ENCODE measurements at regions of chr2 and their contacts with region 1.

Region 1: DNA sequence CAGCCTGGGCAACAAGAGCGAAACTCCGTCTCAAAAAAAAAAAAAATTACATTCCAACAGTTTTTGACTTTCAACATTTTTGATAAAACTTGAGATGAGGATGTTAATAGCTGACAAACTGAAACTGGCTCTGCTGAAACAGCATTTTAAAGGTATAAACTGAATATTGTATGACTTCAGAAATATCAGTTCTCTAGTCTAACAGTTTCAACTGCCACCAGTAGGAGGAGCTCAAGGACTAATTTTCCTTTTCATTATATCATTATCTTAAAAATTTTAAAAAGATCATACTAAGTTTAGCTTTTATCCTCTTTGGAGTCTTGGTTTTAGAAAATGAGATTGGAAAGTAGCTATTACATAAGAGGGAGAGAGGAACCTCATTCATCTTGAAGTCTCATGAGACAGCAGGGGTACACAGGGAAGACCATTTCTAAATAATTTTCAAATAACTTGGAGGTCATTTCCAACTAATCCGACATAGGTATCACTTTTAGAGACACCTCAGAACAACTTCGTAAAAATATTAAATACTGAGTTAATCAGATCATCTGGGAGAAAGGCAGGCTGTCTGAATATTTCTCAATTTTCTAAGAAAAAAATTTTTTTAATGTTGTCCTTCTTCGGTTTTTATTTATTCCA is 37.6 kb upstream of the MCM6 start:
- DNase-seq: no peak
- H3K4me3 ChIP-seq: no peak overlapping the region
- CTCF ChIP-seq: peak; percentile 51

Region 2: DNA sequence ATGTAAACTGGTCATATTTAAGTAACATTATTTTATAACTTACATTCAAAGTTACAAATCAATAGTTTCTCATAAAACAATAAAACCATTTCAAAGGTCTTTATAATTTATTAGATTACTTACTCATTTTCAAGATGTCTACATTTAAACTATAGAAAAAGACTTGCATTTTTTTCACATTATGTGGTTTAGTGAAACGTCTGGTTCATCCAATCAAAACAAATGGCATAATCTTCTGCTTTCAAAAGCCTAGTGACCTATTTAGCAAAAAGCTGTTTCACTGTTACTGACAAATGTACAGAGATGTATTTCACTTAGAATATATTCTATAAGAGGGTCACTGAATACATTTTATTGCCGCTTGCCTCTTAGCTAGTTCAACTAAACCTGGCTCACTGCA is 11.7 kb after region 1 on chr2:
- CTCF ChIA-PET with region 1: interaction called, 22 read pairs
- POLR2A ChIA-PET with region 1: interaction called, 3 read pairs
- DNase-seq: peak; percentile 29
- H3K4me3 ChIP-seq: no peak overlapping the region
- CTCF ChIP-seq: no peak

Region 3: DNA sequence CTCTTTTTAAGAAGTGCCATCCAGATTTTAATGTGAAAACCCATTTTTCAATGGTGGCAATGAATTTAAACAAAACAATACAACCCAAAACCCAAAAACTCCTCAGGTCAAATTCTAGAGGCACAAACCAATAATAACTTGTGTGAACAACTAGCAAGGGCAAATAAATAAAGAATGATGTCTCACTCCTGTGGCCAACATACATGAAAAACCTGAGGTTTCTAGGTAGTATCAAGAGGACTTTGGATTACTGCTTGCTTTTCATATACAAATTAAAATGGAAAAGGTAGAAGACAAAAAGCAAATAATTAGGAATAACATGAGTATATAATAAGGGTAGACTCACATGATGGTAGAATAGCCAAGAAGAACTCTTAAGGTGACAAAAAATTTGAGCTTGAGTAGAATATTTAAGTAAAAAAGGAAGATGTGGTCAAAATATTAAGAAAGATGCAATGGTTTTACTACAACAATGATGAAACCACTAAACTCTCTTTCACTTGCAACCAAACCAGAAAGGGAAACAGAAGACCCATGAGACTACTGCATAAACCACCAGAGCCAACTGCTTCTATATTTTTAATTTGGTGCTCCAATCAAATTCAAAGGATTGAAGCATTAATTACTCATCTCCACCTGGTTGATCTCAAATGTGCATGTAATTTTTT is 18.1 kb after region 1 on chr2:
- CTCF ChIA-PET with region 1: interaction called, 22 read pairs
- POLR2A ChIA-PET with region 1: interaction called, 3 read pairs
- DNase-seq: no peak
- H3K4me3 ChIP-seq: no peak overlapping the region
- CTCF ChIP-seq: no peak

Region 4: DNA sequence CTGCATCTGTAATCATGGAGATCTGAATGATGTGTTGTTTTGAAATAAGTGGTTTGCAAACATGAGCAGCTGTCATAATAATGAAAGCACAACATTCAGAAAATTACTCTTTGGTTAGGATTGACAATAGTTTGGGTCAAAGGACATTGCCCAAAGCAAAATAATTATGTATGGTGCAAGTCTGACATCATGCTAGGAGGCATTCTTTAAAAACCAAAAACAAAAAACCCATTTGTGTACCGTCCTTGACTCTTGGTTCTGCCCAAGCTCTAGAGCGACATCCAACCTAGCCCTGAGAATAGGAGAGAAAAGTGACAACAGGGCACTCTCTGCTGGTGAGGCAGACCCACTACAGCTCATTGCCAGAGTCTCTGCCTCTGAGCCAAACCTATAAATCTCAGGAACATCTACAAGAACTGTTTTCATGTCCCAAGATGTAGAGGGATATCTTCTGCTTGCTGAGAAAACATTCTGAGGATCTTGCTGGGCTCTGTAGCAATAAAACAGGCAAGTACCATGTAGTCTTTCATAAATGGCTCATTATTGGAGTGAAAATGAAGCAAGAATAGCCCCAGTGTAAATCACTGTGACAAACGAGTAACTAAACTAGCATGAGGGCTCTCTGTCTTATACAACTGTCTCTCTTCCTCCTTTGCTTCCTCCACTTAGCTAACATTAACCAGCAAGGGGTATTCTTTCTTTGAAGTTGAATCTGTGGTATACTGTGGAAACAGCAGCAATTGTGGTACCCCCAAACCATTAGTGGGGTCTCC is 470.9 kb after region 1 on chr2:
- CTCF ChIA-PET with region 1: interaction called, 83 read pairs
- POLR2A ChIA-PET with region 1: no interaction called
- DNase-seq: no peak
- H3K4me3 ChIP-seq: no peak overlapping the region
- CTCF ChIP-seq: peak; percentile 23

Region 5: GRCh38 chr2:136423516-136423996 is 509.7 kb after region 1 on chr2:
- CTCF ChIA-PET with region 1: interaction called, 16 read pairs
- POLR2A ChIA-PET with region 1: no interaction called
- DNase-seq: no peak
- H3K4me3 ChIP-seq: peak overlapping the region; percentile 59
- CTCF ChIP-seq: peak; percentile 88

Measured in AG04449 (cell line).